GM10248 (cell line): ENCODE measurements at regions of chr22 and their contacts with region 1.

Region 1: DNA sequence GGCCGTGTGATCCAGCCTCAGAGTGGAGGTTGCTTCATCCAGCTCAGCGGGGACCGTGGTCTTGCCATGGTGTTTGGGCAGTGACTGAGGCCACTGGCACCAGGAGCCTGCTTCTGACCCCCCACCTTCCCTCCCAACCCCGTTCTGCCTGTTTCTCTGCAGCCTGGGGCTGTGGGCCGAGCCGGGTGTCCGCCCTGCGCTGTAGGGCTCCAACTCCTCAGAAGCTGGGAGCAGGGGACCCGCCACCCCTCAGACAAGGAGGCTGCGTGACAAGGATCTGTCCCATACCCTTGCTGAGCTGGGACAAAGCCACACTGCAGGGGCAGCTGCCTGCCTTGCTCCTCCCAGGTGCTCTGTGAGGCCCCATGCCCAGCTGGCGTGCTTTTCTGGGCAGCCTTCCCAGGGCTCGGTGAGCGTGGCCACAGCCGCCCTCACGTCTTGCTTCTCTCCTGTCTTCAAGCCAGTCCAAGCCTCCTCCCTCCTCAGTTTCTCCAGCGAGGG is 11.7 kb upstream of the ARFGAP3 start:
- DNase-seq: no peak
- CTCF ChIP-seq: no peak

Region 2: GRCh38 chr22:42708417-42708816 is 160.4 kb before region 1 on chr22:
- CTCF ChIA-PET with region 1: no interaction called
- POLR2A ChIA-PET with region 1: no interaction called
- DNase-seq: no peak
- CTCF ChIP-seq: no peak

Region 3: DNA sequence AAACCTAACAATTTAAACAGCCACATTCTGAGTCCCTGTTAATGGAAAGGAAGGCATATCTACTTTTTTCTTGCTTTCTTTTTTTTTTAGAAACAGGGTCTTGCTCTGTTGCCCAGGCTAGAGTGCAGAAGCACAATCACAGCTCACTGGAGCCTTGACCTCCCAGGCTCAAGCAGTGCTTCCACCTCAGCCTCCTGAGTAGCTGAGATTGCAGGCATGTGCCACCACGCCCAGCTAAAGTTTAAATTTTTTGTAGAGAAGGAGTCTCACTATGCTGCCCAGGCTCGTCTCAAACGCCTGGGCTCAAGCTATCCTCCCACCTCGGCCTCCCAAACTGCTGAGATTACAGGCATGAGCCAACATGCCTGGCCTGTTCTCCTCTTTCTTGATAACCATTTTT is 37.1 kb before region 1 on chr22:
- CTCF ChIA-PET with region 1: interaction called, 10 read pairs
- POLR2A ChIA-PET with region 1: no interaction called
- DNase-seq: no peak
- CTCF ChIP-seq: no peak

Region 4: DNA sequence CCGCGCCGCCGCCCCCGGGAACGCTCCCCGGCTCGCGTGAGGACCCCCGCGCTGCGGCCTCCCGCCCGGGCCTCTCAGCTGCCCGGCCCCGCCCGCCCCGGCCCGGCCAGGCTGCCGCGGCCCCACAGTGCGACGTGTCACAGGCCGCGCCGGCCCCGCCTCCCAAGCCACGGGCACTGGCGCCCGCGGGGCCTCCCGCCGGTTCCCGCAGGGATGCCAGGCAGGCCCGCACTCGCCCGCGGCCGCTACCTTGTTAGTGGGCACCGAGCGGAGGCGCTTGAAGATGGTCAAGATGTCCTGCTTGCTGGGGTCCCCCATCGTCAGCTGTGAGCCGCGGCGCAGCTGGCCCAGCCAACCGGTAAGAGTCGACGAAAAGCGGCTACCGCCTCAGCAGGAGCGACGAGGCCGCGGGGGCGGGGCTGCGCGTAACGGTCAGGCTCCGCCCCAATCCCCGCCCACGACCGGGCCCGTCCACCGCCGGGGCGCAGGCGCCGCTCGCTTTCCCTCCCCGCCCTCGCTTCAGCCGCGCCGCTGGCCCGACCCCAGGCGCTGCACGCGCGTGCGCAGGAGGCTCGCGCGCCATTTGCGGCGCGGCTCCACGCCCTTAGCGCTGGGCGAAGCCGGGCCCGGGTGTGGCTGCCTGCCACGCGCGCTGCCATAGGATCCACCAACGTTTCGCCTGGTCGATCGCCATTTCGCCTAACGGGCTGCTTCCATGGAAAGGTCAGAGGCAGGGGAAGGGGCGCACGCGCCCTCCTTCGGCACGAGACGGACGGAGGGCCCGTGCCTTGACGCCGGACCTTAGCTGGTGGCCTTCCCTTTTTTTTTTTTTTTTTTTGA is 11.7 kb before region 1 on chr22 and contains the start of gene ARFGAP3:
- CTCF ChIA-PET with region 1: interaction called, 54 read pairs
- POLR2A ChIA-PET with region 1: no interaction called
- DNase-seq: peak; percentile 100
- CTCF ChIP-seq: no peak

Region 5: DNA sequence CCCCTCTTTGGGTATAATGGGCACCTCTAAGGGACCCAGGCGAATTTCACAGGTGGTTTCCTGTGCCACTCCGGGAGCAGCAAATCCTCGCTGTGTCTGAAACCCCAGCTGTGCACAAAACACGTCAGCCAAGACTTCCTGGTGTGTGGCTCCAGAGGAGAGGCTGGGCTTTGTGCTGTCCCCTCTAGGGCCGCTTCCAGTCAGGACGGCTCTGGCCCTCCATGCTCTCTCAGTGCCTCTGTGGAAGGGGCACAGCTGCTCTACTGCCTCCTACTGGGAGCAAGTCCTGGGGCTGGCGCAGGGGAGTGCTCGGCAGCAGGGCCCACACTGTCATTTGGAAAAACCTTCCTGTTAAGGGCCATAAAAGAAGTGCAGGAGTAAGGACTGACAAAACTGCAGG is 12.0 kb after region 1 on chr22:
- CTCF ChIA-PET with region 1: interaction called, 49 read pairs
- POLR2A ChIA-PET with region 1: no interaction called
- DNase-seq: no peak
- CTCF ChIP-seq: peak; percentile 17

Region 6: GRCh38 chr22:42889304-42889703 is 20.5 kb after region 1 on chr22:
- CTCF ChIA-PET with region 1: interaction called, 49 read pairs
- POLR2A ChIA-PET with region 1: no interaction called
- DNase-seq: peak; percentile 86
- CTCF ChIP-seq: no peak

Region 7: DNA sequence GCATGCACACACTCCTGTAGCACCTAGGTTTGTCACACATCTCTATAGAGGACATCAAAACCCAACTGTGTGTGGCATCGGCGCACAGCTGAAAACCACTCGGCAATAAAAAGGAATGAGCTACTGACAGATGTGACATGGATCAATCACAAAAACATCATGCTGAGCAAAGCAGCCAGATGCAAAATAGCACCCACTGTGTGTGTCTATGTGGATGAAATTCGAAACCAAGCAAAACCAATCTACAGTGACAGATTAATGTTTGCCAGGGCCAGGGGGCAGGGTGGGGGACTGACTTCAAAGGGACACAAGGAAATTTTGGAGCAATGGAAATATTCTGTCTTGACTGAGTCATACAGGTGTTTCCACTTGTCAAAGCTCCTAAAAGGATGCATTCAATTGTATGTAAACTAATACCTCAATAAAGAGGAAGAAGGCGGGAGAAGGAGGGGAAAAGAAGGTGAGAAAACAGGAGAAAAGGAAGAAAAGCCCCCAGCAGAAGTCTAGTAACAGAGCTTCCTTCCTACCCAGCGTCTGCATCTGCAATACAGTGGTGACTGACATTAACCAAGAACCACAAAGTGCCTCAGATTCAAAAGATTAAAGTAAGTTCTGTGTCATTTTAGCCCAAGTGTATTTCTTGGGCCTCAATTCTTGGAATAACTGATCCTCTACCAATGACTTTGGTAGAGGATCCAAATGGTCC is 96.3 kb after region 1 on chr22:
- CTCF ChIA-PET with region 1: interaction called, 12 read pairs
- POLR2A ChIA-PET with region 1: no interaction called
- DNase-seq: peak; percentile 57
- CTCF ChIP-seq: no peak

Region 8: DNA sequence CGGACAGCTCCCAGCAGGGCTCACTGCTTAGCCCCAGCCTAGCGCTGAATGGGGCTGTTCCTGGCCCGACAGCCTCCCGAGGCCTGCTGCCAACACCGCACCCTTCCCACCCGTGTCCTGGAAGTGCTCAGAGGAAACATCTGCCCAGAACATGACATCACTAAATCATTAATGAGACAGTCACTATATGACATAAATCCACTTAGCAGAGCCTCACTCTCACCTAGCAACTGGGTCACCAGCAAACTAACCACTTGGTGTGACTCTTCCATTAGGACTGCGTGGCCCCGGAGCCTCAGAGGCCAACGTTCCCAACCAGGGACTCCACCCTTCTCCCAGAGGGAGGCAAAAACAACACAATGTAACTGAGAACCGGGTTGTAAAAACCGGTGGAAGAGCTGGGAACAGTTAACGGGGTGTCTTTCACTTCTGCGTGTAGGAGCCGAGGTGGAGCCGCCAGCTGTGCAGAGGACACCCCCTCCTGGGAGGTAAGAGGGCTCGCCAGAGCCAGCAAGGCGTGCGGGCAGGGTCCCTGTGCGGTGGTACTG is 167.6 kb after region 1 on chr22:
- CTCF ChIA-PET with region 1: interaction called, 17 read pairs
- POLR2A ChIA-PET with region 1: no interaction called
- DNase-seq: no peak
- CTCF ChIP-seq: no peak

Region 9: DNA sequence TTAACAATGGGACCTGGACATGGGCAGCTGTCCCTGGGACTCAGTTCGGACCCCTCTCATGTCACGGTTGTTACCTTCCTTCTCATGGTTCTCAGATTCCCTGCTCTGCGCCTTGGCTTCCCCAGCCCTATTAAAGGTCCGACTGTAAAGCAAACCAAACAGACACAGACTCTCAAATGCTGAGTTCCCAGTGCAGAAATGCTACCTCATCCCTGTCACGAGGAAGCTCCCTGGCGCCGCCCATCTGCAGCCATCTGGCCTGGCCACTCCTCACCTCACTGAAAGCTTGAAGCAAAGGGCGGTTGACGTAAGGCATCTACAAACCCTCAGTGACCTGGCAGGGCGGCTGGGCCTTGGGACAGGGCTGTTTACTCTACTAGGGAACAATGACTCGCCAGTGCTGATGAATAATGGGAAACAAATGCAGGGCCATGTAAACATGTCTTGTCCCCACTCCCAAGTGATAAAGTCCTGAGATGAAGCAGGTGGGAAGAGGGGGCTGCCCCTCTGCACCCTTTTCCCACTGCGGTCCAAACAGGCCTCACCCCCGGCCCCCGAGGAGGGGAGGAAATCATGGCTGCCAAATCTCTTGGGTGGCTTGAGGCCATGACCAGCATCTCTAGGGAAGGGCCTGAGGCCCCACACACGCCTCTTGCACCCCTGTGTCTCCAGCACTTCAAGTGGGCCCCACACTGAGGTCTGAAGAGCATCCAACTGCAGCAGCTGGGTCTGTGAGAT is 425.0 kb after region 1 on chr22:
- CTCF ChIA-PET with region 1: no interaction called
- POLR2A ChIA-PET with region 1: no interaction called
- DNase-seq: no peak
- CTCF ChIP-seq: no peak